ENCODE measurements at regions of chr3 and their contacts with region 1.

Region 1: DNA sequence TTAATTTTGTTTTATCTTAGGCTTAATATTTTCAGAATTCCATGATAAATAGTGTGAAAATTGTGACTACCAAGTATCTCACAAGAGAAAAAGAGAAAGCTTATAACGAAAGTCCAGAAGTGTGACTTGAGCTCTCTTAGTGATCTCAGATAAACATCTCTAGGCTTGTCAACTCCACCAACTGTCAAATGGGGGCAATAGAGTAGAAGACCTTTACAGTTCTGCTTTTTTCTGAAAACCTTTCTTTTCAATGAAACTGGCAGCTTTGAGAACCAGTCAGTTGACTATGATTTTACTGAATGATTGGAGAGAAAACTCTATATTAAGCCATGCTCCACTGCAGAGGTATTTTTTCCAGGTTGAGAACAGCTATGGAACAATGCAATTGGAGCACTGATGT is 119.2 kb upstream of the TP63 start:
- DNase-seq: no peak
- ATAC-seq: peak; percentile 25
- H3K4me3 Mint-ChIP-seq: no peak overlapping the region
- H3K27ac Mint-ChIP-seq: no peak overlapping the region
- H3K4me1 Mint-ChIP-seq: peaks cover 21% of the 10 kb centered on the region
- H3K27me3 Mint-ChIP-seq: peaks cover 2% of the 10 kb centered on the region
- CTCF ChIP-seq: no peak

Region 2: DNA sequence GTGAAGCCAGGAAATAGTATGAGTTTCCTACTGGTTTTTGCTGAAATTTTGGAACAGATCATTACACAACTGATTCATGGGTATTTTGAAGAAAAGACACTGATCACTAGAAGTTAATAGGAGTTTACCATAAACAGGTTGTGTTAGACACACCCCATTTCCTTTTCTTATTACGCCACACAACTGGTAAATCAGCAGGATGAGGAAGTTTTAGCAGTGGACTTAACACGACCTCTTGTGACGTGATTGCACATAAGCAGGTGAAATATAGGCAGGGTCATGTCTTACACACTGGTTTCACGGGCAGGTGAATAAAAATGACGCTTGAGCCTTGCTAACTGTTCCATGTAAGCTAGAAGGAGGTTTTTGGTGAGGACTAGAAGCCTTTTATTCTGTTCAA is 367.4 kb before region 1 on chr3:
- CTCF ChIA-PET with region 1: no interaction called
- POLR2A ChIA-PET with region 1: no interaction called
- intact Hi-C with region 1: no loop called
- DNase-seq: no peak
- ATAC-seq: no peak
- H3K4me3 Mint-ChIP-seq: no peak overlapping the region
- H3K27ac Mint-ChIP-seq: no peak overlapping the region
- H3K4me1 Mint-ChIP-seq: no peaks in the 10 kb centered on the region
- H3K27me3 Mint-ChIP-seq: peaks cover 18% of the 10 kb centered on the region
- CTCF ChIP-seq: no peak

Region 3: DNA sequence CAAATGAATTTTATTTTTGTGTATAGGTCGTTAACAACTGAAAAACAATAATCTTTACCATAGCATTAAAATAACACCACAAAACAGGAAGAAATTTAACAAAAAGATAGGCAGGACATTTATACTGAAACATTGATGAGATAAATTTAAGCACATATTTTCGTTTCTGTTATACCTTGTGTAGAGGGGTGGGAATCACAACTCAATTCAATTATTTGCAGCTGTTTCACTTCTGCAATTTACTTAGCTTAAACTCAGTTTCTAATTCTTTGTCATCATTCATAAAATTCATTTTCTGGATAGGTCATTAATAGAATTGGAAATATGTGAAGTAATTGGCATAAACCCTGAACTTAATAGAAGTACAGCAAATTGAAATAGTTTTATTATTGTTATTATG is 161.5 kb after region 1 on chr3:
- CTCF ChIA-PET with region 1: interaction called, 3 read pairs
- POLR2A ChIA-PET with region 1: no interaction called
- intact Hi-C with region 1: loop called (anchors 10 kb)
- DNase-seq: no peak
- ATAC-seq: no peak
- H3K4me3 Mint-ChIP-seq: no peak overlapping the region
- H3K27ac Mint-ChIP-seq: no peak overlapping the region
- H3K4me1 Mint-ChIP-seq: peaks cover 1% of the 10 kb centered on the region
- H3K27me3 Mint-ChIP-seq: no peaks in the 10 kb centered on the region
- CTCF ChIP-seq: no peak

Region 4: GRCh38 chr3:189786479-189787064 is 274.5 kb after region 1 on chr3:
- CTCF ChIA-PET with region 1: no interaction called
- POLR2A ChIA-PET with region 1: no interaction called
- intact Hi-C with region 1: no loop called
- DNase-seq: no peak
- ATAC-seq: no peak
- H3K4me3 Mint-ChIP-seq: no peak overlapping the region
- H3K27ac Mint-ChIP-seq: no peak overlapping the region
- H3K4me1 Mint-ChIP-seq: peaks cover 3% of the 10 kb centered on the region
- H3K27me3 Mint-ChIP-seq: no peaks in the 10 kb centered on the region
- CTCF ChIP-seq: no peak

Measured in activated B cell treated with CpG ODN at 0.5 μM for 24 hours (primary cell).